PC-9 (cell line): ENCODE measurements at regions of chr19 and their contacts with region 1.

Region 1: DNA sequence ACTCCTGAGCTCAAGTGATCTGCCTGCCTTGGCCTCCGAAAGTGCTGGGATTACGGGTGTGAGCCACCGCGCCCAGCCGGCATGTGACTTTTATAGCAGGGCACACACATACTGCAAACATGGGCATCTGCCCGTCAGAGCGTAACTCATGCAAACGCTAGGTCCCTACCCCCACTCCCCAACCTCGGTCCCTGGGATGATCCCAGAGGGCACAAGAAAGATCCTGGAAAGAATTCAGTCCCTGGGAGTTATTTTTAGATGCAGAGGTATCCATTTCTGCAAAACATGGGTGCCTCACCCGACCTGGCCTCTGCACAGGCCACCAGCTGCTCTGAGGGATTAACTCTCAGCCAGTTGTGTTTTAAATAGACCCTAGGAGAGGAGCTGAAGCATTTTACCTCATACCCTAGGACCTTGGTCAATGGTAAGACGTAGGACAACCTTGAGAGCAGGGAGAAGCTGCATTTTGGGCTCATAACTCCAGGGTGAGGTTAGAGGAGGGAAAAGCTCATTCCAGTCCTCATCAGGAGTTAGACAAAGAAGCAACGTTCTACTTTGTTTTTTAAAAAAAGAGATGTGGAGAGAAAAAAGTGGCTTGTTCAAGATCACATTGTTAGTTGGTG is 10.8 kb downstream of the TMEM38A start:
- DNase-seq: no peak
- H3K4me3 ChIP-seq: no peak overlapping the region
- H3K27ac ChIP-seq: no peak overlapping the region
- H3K4me1 ChIP-seq: peaks cover 2% of the 10 kb centered on the region; the same call in 1 of the 2 replicates
- H3K27me3 ChIP-seq: no peaks in the 10 kb centered on the region
- CTCF ChIP-seq: no peak

Region 2: GRCh38 chr19:16306728-16307402 is 364.9 kb before region 1 on chr19:
- CTCF ChIA-PET with region 1: no interaction called
- POLR2A ChIA-PET with region 1: interaction called, 10 read pairs
- intact Hi-C with region 1: no loop called
- DNase-seq: no peak
- H3K4me3 ChIP-seq: no peak overlapping the region
- H3K27ac ChIP-seq: no peak overlapping the region
- H3K4me1 ChIP-seq: peaks cover 9% of the 10 kb centered on the region
- H3K27me3 ChIP-seq: no peaks in the 10 kb centered on the region
- CTCF ChIP-seq: no peak

Region 3: GRCh38 chr19:16637535-16637934 is 34.2 kb before region 1 on chr19:
- CTCF ChIA-PET with region 1: no interaction called
- POLR2A ChIA-PET with region 1: no interaction called
- intact Hi-C with region 1: no loop called
- DNase-seq: no peak
- H3K4me3 ChIP-seq: no peak overlapping the region
- H3K27ac ChIP-seq: no peak overlapping the region
- H3K4me1 ChIP-seq: no peaks in the 10 kb centered on the region
- H3K27me3 ChIP-seq: no peaks in the 10 kb centered on the region
- CTCF ChIP-seq: no peak

Region 4: DNA sequence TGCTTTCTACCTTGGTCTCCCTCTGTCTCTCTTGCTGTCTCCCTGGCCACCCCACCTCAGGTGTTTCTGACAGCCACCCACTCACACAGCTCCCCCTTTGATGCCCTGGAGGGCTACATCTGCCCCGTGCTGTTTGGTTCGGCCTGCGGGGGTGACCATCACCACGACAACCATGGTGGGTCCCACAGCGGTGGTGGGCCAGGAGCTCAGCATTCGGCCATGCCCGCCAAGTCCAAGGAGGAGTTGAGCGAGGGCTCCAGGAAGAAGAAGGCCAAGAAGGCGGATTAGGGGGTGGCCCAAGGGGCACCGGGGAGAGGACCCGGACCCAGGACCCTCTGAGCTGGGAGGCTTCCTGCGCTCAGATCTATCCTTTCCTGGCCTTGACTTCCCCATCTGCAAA is 16.3 kb after region 1 on chr19:
- CTCF ChIA-PET with region 1: no interaction called
- POLR2A ChIA-PET with region 1: interaction called, 10 read pairs
- intact Hi-C with region 1: no loop called
- DNase-seq: no peak
- H3K4me3 ChIP-seq: no peak overlapping the region
- H3K27ac ChIP-seq: no peak overlapping the region
- H3K4me1 ChIP-seq: peaks cover 14% of the 10 kb centered on the region
- H3K27me3 ChIP-seq: no peaks in the 10 kb centered on the region
- CTCF ChIP-seq: no peak